ENCODE measurements at regions of chr2 and their contacts with region 1.

Region 1: GRCh38 chr2:39513641-39514094 is 76.6 kb upstream of the MAP4K3 start:
- DNase-seq: peak; percentile 83
- ATAC-seq: 0 out of 3 replicates have a peak, but pooled peaks have one; percentile 4
- H3K4me3 ChIP-seq: no peak overlapping the region
- H3K27ac ChIP-seq: peak overlapping the region; percentile 92
- H3K4me1 ChIP-seq: peaks cover 94% of the 10 kb centered on the region
- H3K27me3 ChIP-seq: no peaks in the 10 kb centered on the region
- CTCF ChIP-seq: peak; percentile 85
- EP300 ChIP-seq: peak in 1 of 2 experiments; percentile 35; a peak in 1 of 4 replicates
- POLR2A ChIP-seq: no peak
- RAD21 ChIP-seq: peak; percentile 72

Region 2: GRCh38 chr2:39436592-39437510 is 76.8 kb before region 1 on chr2 and contains the start of gene MAP4K3:
- CTCF ChIA-PET with region 1: no interaction called
- POLR2A ChIA-PET with region 1: interaction called, 21 read pairs
- in situ Hi-C with region 1: no loop called
- intact Hi-C with region 1: loop called (anchors 2 kb)
- DNase-seq: peak; percentile 96
- ATAC-seq: peak; percentile 85
- H3K4me3 ChIP-seq: peak within 1 kb of the TSS; percentile 92 to 95 (median 93)
- H3K27ac ChIP-seq: peak within 1 kb of the TSS; percentile 94
- H3K4me1 ChIP-seq: peaks cover 62% of the 10 kb centered on the region
- H3K27me3 ChIP-seq: no peaks in the 10 kb centered on the region; a peak in 1 of 5 replicates
- CTCF ChIP-seq: peak; percentile 32
- EP300 ChIP-seq: peak in 1 of 2 experiments; percentile 42; a peak in 1 of 4 replicates
- POLR2A ChIP-seq: peak; percentile 64 to 81
- RAD21 ChIP-seq: peak; percentile 63
- total RNA-seq, gene MAP4K3: 45.9 and 49.6 TPM in 2 replicates

Region 3: GRCh38 chr2:39499336-39499735 is 14.3 kb before region 1 on chr2:
- CTCF ChIA-PET with region 1: no interaction called
- POLR2A ChIA-PET with region 1: interaction called, 20 read pairs
- in situ Hi-C with region 1: no loop called
- intact Hi-C with region 1: no loop called
- DNase-seq: no peak
- ATAC-seq: no peak
- H3K4me3 ChIP-seq: no peak overlapping the region
- H3K27ac ChIP-seq: no peak overlapping the region
- H3K4me1 ChIP-seq: peaks cover 59% of the 10 kb centered on the region
- H3K27me3 ChIP-seq: no peaks in the 10 kb centered on the region
- CTCF ChIP-seq: no peak
- EP300 ChIP-seq: no peak
- POLR2A ChIP-seq: no peak
- RAD21 ChIP-seq: no peak

Region 4: GRCh38 chr2:39550701-39551285 is 37.1 kb after region 1 on chr2:
- CTCF ChIA-PET with region 1: no interaction called
- POLR2A ChIA-PET with region 1: interaction called, 31 read pairs
- in situ Hi-C with region 1: loop called (anchors 5 kb)
- intact Hi-C with region 1: loop called (anchors 1 kb)
- DNase-seq: peak; percentile 99
- ATAC-seq: peak; percentile 98
- H3K4me3 ChIP-seq: no peak overlapping the region
- H3K27ac ChIP-seq: peak overlapping the region; percentile 72
- H3K4me1 ChIP-seq: peaks cover 69% of the 10 kb centered on the region
- H3K27me3 ChIP-seq: no peaks in the 10 kb centered on the region
- CTCF ChIP-seq: peak; percentile 43
- EP300 ChIP-seq: peak; percentile 65 to 100; a peak in 3 of 4 replicates
- POLR2A ChIP-seq: 0 out of 4 replicates have a peak, but pooled peaks of 1 of the 2 experiments have one; percentile 20
- RAD21 ChIP-seq: 0 out of 2 replicates have a peak, but pooled peaks have one; percentile 14

Region 5: GRCh38 chr2:39696838-39697237 is 183.2 kb after region 1 on chr2:
- CTCF ChIA-PET with region 1: interaction called, 5 read pairs
- POLR2A ChIA-PET with region 1: no interaction called
- in situ Hi-C with region 1: no loop called
- intact Hi-C with region 1: loop called (anchors 10 kb)
- DNase-seq: peak; percentile 12
- ATAC-seq: peak; percentile 50; the same call in 1 of the 3 replicates
- H3K4me3 ChIP-seq: no peak overlapping the region
- H3K27ac ChIP-seq: no peak overlapping the region
- H3K4me1 ChIP-seq: peaks cover 8% of the 10 kb centered on the region; the same call in 1 of the 2 replicates
- H3K27me3 ChIP-seq: no peaks in the 10 kb centered on the region
- CTCF ChIP-seq: peak; percentile 16; the same call in 1 of the 2 replicates
- EP300 ChIP-seq: no peak
- POLR2A ChIP-seq: no peak
- RAD21 ChIP-seq: no peak

Region 6: GRCh38 chr2:39728941-39729351 is 215.3 kb after region 1 on chr2:
- CTCF ChIA-PET with region 1: interaction called, 23 read pairs
- POLR2A ChIA-PET with region 1: interaction called, 9 read pairs
- in situ Hi-C with region 1: no loop called
- intact Hi-C with region 1: loop called (anchors 1 kb)
- DNase-seq: peak; percentile 58
- ATAC-seq: peak; percentile 80
- H3K4me3 ChIP-seq: no peak overlapping the region
- H3K27ac ChIP-seq: no peak overlapping the region
- H3K4me1 ChIP-seq: peaks cover 27% of the 10 kb centered on the region; the same call in 1 of the 2 replicates
- H3K27me3 ChIP-seq: peaks cover 0 to 11% of the 10 kb centered on the region in 2 experiments; a peak in 3 of 5 replicates
- CTCF ChIP-seq: peak; percentile 72
- EP300 ChIP-seq: no peak
- POLR2A ChIP-seq: no peak
- RAD21 ChIP-seq: peak; percentile 67

Region 7: DNA sequence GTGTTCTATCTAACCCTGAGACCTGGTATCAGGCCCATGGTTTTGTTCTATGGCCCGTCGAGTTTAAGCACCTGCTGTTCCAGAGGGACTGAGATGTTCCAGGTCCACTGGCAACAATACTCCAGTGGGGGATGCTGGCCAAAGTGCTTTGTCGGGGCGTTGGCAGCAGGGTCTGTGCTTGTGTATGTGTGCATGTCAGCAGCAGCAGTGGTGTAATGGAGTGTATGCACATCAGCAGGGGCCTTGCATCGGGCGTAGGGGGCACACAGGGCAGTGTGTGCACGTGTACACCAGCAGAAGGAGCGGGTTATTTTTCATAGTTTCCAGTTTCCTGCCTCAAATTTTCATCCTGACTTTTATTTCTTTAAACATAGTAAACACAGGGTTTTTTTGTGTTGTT is 303.2 kb after region 1 on chr2:
- CTCF ChIA-PET with region 1: no interaction called
- POLR2A ChIA-PET with region 1: no interaction called
- in situ Hi-C with region 1: no loop called
- intact Hi-C with region 1: no loop called
- DNase-seq: no peak
- ATAC-seq: no peak
- H3K4me3 ChIP-seq: no peak overlapping the region
- H3K27ac ChIP-seq: no peak overlapping the region
- H3K4me1 ChIP-seq: no peaks in the 10 kb centered on the region
- H3K27me3 ChIP-seq: peaks cover 0 to 13% of the 10 kb centered on the region in 2 experiments; a peak in 1 of 5 replicates
- CTCF ChIP-seq: no peak
- EP300 ChIP-seq: no peak
- POLR2A ChIP-seq: no peak
- RAD21 ChIP-seq: no peak